Ovary (tissue), 10 donors: ENCODE measurements at regions of chr4 and their contacts with region 1.

Region 1: GRCh38 chr4:42617030-42617429 is 39.9 kb downstream of the ATP8A1 start:
- DNase-seq: no peak
- H3K4me3 ChIP-seq: no peak overlapping the region
- H3K27ac ChIP-seq: no peak overlapping the region
- H3K4me1 ChIP-seq: peaks cover 1% of the 10 kb centered on the region
- H3K27me3 ChIP-seq: no peaks in the 10 kb centered on the region
- CTCF ChIP-seq: no peak
- EP300 ChIP-seq: no peak
- POLR2A ChIP-seq: no peak

Region 2: GRCh38 chr4:40822420-40823166 is 1794.4 kb before region 1 on chr4:
- intact Hi-C with region 1: loop called in 1 of 4 experiments (anchors 5 kb)
- DNase-seq: no peak
- H3K4me3 ChIP-seq: no peak overlapping the region
- H3K27ac ChIP-seq: no peak overlapping the region
- H3K4me1 ChIP-seq: no peaks in the 10 kb centered on the region
- H3K27me3 ChIP-seq: no peaks in the 10 kb centered on the region
- CTCF ChIP-seq: no peak
- EP300 ChIP-seq: no peak
- POLR2A ChIP-seq: no peak

Region 3: GRCh38 chr4:42638993-42639392 is 22.0 kb after region 1 on chr4:
- intact Hi-C with region 1: no loop called
- DNase-seq: no peak
- H3K4me3 ChIP-seq: no peak overlapping the region
- H3K27ac ChIP-seq: no peak overlapping the region
- H3K4me1 ChIP-seq: no peaks in the 10 kb centered on the region
- H3K27me3 ChIP-seq: no peaks in the 10 kb centered on the region
- CTCF ChIP-seq: no peak
- EP300 ChIP-seq: no peak
- POLR2A ChIP-seq: no peak

Region 4: DNA sequence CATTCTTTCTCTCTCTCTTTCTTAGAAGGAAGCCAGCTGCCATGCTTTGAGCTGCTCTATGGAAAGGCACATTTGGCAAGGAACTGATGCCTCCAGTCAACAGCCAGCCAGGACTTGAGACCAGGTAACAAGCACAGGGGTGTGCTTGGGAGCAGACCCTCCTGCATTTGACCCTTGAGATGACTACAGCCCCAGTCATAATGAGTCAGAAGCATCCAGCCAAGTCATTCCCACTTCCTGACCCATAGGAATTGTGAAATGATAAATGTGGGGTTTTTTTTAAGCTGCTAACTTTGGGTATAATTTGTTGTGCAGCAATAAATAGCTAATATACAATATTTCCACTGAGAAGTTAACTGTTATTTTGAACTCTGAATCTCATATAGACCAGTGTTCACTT is 722.4 kb after region 1 on chr4:
- intact Hi-C with region 1: no loop called
- DNase-seq: no peak
- H3K4me3 ChIP-seq: no peak overlapping the region
- H3K27ac ChIP-seq: no peak overlapping the region
- H3K4me1 ChIP-seq: no peaks in the 10 kb centered on the region
- H3K27me3 ChIP-seq: no peaks in the 10 kb centered on the region
- CTCF ChIP-seq: no peak
- EP300 ChIP-seq: no peak
- POLR2A ChIP-seq: no peak